ENCODE measurements at regions of chr17 and their contacts with region 1.

Region 1: GRCh38 chr17:30970831-30971567 is at the start of gene RNF135:
- DNase-seq: peak; percentile 70
- H3K4me3 Mint-ChIP-seq: peak within 1 kb of the TSS; percentile 96
- H3K27ac Mint-ChIP-seq: peak within 1 kb of the TSS; percentile 79
- H3K4me1 Mint-ChIP-seq: peaks cover 23% of the 10 kb centered on the region
- H3K27me3 Mint-ChIP-seq: no peaks in the 10 kb centered on the region
- total RNA-seq, gene RNF135: 7.3 to 8.5 TPM

Region 2: DNA sequence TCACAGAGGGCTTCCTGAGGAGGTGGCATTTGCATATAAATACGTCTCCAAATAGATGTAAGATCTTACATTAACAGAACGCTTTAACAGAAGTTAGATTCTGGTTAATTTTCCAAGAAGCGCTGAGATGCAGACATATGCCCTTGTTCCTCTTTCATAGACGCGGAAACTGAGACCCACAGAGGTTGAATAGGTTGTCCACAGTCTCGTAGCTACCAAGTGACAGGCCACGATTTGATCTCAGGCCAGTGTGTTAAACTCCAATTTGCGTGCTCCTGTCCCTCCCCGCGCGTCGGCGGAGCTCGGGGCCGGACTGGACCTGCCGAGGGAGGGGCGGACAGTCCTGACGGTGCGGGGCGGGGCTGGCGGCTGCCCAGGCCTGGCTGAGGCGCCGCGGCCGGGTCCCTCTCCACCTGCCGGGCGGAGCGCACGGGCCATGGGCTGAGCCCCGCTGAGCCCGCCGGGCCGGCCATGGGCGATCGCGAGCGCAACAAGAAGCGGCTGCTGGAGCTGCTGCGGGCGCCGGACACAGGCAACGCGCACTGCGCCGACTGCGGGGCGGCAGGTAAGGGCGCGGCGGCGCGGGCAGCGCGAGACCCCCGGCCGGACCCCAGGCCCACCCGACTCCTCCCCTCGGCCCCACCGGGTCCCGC is 49.3 kb before region 1 on chr17 and contains the start of gene ADAP2:
- CTCF ChIA-PET with region 1: no interaction called
- POLR2A ChIA-PET with region 1: no interaction called
- intact Hi-C with region 1: no loop called
- DNase-seq: no peak
- H3K4me3 Mint-ChIP-seq: peak within 1 kb of the TSS; percentile 49
- H3K27ac Mint-ChIP-seq: no peak within 1 kb of the TSS
- H3K4me1 Mint-ChIP-seq: peaks cover 11% of the 10 kb centered on the region
- H3K27me3 Mint-ChIP-seq: peaks cover 38% of the 10 kb centered on the region
- total RNA-seq, gene ADAP2: 1.0 to 1.3 TPM

Region 3: DNA sequence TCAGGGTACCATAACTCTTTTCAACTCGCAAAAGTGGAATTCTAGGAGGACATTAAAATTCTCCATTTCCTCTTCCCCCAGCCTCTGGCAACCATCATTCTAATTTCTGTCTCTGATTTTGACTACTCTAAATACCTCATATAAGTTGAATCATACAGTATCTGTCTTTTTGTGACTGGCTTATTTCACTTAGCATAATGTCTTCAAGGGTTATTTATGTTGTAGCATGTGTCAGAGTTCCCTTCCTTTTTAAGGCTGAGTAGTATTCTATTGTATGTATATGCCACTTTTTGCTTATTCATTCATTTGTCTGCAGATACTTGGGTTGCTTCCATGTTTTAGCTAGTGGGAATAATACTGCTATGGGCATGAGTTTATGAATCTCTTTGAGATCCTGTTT is 11.9 kb after region 1 on chr17:
- CTCF ChIA-PET with region 1: no interaction called
- POLR2A ChIA-PET with region 1: no interaction called
- intact Hi-C with region 1: loop called (anchors 1 kb)
- DNase-seq: no peak
- H3K4me3 Mint-ChIP-seq: no peak overlapping the region
- H3K27ac Mint-ChIP-seq: peak overlapping the region; percentile 34
- H3K4me1 Mint-ChIP-seq: peaks cover 14% of the 10 kb centered on the region
- H3K27me3 Mint-ChIP-seq: no peaks in the 10 kb centered on the region

Region 4: DNA sequence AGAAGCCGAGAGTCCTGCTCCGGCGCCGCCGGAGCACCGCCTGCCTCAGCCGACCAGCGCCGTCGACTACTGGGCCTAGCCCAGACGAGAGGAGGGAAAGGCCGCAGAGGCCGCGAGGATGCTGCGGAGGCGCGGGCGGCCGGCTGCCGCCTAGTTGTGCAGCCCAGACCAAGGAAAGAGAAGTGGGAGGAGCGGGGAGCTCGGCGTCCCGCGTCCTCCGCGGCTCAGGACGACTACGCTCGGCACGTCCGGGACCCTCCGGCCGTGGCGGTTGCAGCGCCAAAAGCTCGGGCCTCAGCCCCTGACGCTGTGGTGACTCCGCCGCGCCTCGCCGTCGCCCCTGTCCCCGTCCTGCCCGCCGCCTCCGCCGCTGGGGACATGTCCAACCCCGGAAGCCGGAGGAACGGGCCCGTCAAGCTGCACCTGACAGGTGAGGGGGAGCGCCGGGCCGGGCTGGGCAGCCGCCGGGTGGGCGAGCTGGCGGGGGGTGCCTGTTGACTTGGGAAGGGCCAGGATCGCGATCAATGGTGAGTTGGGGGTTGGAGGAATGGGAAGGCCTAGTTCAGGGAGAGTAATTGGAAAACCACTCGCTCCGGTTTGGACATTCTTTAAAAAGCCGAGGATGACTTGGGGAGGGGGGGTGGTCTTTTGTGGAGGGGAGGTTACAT is 37.5 kb after region 1 on chr17:
- CTCF ChIA-PET with region 1: interaction called, 3 read pairs
- POLR2A ChIA-PET with region 1: no interaction called
- intact Hi-C with region 1: loop called (anchors 5 kb)
- DNase-seq: peak; percentile 74
- H3K4me3 Mint-ChIP-seq: peak overlapping the region; percentile 87
- H3K27ac Mint-ChIP-seq: peak overlapping the region; percentile 78
- H3K4me1 Mint-ChIP-seq: peaks cover 17% of the 10 kb centered on the region
- H3K27me3 Mint-ChIP-seq: no peaks in the 10 kb centered on the region

Region 5: DNA sequence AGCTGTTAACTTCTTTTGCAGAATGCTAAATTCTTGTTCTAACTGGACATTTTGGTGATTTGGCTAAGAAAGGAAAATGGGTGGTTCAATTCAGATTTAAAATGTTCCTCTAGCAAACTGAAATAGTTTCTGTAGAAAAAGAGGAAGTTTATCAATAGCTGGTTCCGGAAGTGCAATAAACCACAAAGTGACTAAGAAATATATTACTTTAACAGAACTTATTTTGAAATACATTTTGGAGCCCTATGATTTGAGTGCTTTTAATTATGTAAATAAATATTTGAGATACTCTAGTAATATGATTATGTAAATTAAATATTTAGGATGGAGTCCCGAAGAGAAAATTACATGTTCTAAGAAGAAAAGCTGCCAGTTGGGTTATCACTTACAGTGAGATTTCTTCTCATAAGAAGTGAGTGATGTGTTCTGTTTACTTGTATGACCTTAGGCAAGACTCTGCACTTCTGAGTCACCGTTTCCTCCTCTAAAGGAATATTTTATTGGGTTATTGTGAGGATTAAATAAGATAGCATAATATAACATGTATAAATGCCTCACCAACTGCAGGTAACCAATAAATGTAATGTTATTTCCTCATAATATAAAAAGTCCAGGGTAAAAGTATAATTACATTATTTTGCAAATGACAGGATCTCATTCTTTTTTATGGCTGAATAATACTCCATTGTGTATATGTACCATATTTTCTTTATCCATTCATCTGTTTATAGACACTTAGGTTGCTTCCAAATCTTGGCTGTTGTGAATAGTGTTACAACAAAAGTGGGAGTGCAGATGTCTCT is 343.2 kb after region 1 on chr17 and contains the start of gene EVI2B:
- CTCF ChIA-PET with region 1: no interaction called
- POLR2A ChIA-PET with region 1: interaction called, 5 read pairs
- intact Hi-C with region 1: loop called (anchors 5 kb)
- DNase-seq: no peak
- H3K4me3 Mint-ChIP-seq: peak within 1 kb of the TSS; percentile 84
- H3K27ac Mint-ChIP-seq: peak within 1 kb of the TSS; percentile 94
- H3K4me1 Mint-ChIP-seq: peaks cover 48% of the 10 kb centered on the region
- H3K27me3 Mint-ChIP-seq: no peaks in the 10 kb centered on the region
- total RNA-seq, gene EVI2B: 14.1 to 15.9 TPM

Measured in activated CD4-positive, alpha-beta memory T cell treated with anti-CD3 and anti-CD28 coated beads for 36 hours (primary cell).